Natural killer cell (primary cell): ENCODE measurements at regions of chr1 and their contacts with region 1.

Region 1: GRCh38 chr1:237677979-237678378 is 212.7 kb downstream of the ZP4 start:
- DNase-seq: peak in 1 of 2 donors; percentile 23
- ATAC-seq: peak in 1 of 3 donors; percentile 30
- H3K4me3 ChIP-seq: no peak overlapping the region
- H3K4me3 Mint-ChIP-seq: no peak overlapping the region
- H3K27ac ChIP-seq: no peak overlapping the region
- H3K27ac Mint-ChIP-seq: no peak overlapping the region
- H3K4me1 ChIP-seq: no peaks in the 10 kb centered on the region
- H3K4me1 Mint-ChIP-seq: no peaks in the 10 kb centered on the region
- H3K27me3 ChIP-seq: no peaks in the 10 kb centered on the region
- H3K27me3 Mint-ChIP-seq: no peaks in the 10 kb centered on the region
- CTCF ChIP-seq: no peak

Region 2: DNA sequence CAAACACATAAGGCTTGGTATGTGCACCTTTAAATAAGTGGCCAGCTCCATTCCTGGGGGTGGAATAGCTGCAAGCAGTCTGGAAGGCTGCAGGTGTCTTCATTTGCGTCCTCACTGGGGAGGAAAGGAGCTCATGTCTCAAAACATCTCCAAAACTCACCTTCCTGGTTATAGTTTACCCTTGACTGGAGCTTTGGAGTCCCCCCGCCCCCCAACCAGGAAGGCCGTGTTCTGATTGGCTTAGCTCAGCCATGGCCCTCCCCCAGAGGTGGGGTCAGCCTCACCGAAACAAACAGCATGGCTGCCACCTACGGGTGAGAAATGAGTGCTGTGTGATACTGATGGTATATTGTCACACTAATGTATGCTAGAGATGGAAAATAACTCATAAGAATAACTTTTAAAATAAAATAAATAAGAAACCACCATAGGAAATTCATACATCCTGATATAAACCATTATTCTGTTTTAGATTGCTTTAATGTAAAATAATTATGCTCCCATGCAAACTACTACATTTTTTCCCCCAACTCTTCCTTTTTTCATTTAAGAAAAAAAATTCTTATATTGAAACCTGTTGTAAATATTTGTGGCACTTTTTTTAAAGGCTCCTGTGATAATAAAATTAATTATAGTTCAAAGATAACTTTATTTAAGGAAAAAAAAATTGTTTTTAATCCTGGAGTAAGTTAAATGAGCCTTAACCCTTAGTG is 121.9 kb after region 1 on chr1:
- intact Hi-C with region 1: loop called (anchors 1 kb)
- DNase-seq: peak; percentile 23 to 60
- ATAC-seq: peak; percentile 88 to 100 (median 99)
- H3K4me3 ChIP-seq: no peak overlapping the region
- H3K4me3 Mint-ChIP-seq: no peak overlapping the region
- H3K27ac ChIP-seq: no peak overlapping the region
- H3K27ac Mint-ChIP-seq: no peak overlapping the region
- H3K4me1 ChIP-seq: no peaks in the 10 kb centered on the region
- H3K4me1 Mint-ChIP-seq: no peaks in the 10 kb centered on the region
- H3K27me3 ChIP-seq: no peaks in the 10 kb centered on the region
- H3K27me3 Mint-ChIP-seq: no peaks in the 10 kb centered on the region
- CTCF ChIP-seq: peak; percentile 42